HepG2 (cell line): ENCODE measurements at regions of chr19 and their contacts with region 1.

Region 1: GRCh38 chr19:18192673-18193387 is at the start of gene MPV17L2:
- DNase-seq: peak; percentile 99
- ATAC-seq: peak; percentile 93
- H3K4me3 ChIP-seq: peak within 1 kb of the TSS; percentile 70 to 84 (median 83)
- H3K27ac ChIP-seq: peak within 1 kb of the TSS; percentile 73
- H3K4me1 ChIP-seq: peaks cover 30% of the 10 kb centered on the region
- H3K27me3 ChIP-seq: no peaks in the 10 kb centered on the region; a peak in 1 of 5 replicates
- CTCF ChIP-seq: no peak; the same call in 1 of the 2 replicates
- EP300 ChIP-seq: no peak
- POLR2A ChIP-seq: peak; percentile 66 to 85
- RAD21 ChIP-seq: 0 out of 2 replicates have a peak, but pooled peaks have one; percentile 38
- total RNA-seq, gene MPV17L2: 13.0 and 16.7 TPM in 2 replicates

Region 2: DNA sequence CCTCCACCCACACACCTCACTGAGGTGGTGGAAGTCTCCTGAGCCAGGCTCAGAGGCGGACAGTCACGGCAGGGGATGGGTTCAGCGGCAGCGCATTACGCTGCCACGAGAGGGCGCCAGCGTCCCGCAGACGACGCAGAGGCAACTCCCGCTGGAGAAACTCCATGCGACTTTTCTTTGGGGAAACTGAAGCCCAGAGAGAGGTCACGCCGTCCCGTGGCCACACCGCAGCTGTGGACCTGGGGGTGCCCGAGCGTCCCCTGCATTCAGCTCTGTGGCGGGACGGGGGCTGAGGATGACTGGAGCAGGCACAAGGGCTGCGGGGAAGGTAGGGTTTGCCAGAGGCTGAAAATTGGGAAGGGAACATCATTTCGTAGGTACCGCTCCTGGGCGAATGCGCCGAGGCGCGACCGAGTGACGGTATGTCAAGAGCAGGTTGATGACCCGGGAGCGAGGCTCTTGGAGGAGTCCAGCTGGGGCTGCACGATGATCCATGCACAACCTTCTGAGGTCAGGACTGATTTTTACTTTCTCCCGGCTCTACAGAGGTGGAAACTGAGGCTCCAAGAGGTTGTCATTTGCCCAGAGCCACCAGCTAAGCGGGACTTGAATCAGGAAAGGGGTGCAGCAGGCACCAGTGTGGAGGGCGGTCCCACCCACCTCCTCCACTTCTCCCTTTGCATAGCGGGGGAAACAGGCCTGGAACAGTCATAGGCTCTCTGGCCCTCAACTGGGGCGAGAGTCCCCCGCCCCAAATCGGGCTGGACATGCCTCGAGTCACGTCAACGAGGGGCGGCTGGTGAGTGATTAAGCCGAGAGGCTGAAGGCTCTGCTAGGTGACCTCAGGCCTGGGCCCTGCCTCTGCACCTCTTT is 185.6 kb before region 1 on chr19:
- CTCF ChIA-PET with region 1: no interaction called
- POLR2A ChIA-PET with region 1: no interaction called
- in situ Hi-C with region 1: no loop called
- intact Hi-C with region 1: no loop called
- DNase-seq: peak; percentile 46
- ATAC-seq: peak; percentile 88
- H3K4me3 ChIP-seq: peak overlapping the region; percentile 36 to 52 (median 40); a peak in 5 of 6 replicates
- H3K27ac ChIP-seq: no peak overlapping the region
- H3K4me1 ChIP-seq: peaks cover 31% of the 10 kb centered on the region
- H3K27me3 ChIP-seq: no peaks in the 10 kb centered on the region
- CTCF ChIP-seq: peak; percentile 99
- EP300 ChIP-seq: no peak
- POLR2A ChIP-seq: no peak
- RAD21 ChIP-seq: peak; percentile 99

Region 3: DNA sequence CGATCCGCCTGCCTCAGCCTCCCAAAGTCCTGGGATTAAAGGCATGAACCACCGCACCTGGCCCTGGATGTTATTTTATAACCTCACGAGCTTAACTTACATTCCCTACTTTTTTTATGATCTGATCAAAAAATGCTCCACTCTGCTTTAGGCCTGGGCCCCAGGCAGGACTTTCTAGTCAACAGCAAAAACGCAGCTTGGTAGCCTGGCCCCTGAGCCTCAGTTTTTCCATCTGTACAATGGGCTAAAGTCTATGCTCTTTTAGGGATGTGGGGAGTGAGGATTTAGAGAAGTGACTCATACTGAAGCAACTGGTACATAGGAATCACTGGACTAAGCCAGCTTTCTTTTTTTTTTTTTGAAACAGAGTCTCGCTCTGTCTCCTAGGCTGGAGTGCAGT is 51.8 kb before region 1 on chr19:
- CTCF ChIA-PET with region 1: no interaction called
- POLR2A ChIA-PET with region 1: no interaction called
- in situ Hi-C with region 1: no loop called
- intact Hi-C with region 1: no loop called
- DNase-seq: no peak
- ATAC-seq: no peak
- H3K4me3 ChIP-seq: no peak overlapping the region
- H3K27ac ChIP-seq: no peak overlapping the region
- H3K4me1 ChIP-seq: peaks cover 20% of the 10 kb centered on the region
- H3K27me3 ChIP-seq: no peaks in the 10 kb centered on the region; a peak in 1 of 5 replicates
- CTCF ChIP-seq: no peak
- EP300 ChIP-seq: no peak
- POLR2A ChIP-seq: no peak
- RAD21 ChIP-seq: no peak

Region 4: DNA sequence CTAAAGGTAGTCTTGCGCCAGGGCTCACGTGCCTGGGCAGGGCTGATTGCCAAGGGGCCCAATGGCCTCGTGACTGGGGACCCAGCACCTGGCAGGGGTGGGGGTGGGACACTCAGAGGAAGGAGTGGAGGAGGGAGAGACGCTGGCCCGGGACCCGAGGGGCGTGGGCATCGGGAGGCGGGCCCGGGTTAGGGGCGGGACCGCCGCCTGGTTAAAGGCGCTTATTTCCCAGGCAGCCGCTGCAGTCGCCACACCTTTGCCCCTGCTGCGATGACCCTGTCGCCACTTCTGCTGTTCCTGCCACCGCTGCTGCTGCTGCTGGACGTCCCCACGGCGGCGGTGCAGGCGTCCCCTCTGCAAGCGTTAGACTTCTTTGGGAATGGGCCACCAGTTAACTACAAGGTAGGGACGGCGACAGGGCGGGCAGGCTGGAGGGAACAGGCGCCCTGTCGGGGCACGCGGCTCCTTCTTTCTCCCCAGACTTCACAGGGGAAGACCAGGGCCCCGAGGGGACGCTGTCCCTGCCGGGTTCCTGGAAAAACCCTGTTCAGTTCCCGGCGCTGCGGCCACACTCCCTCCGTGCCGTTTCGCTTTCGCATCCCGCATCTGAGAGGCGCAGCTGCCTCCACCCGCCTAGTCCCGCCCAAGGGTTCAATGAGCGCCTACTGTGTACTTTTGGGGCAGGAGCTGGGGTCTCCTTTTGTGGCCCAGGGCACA is 19.1 kb before region 1 on chr19 and contains the start of gene IFI30:
- CTCF ChIA-PET with region 1: no interaction called
- POLR2A ChIA-PET with region 1: interaction called, 15 read pairs
- in situ Hi-C with region 1: no loop called
- intact Hi-C with region 1: no loop called
- DNase-seq: peak; percentile 68
- ATAC-seq: peak; percentile 85
- H3K4me3 ChIP-seq: peak within 1 kb of the TSS; percentile 59 to 80 (median 69)
- H3K27ac ChIP-seq: peak within 1 kb of the TSS; percentile 62
- H3K4me1 ChIP-seq: peaks cover 14% of the 10 kb centered on the region
- H3K27me3 ChIP-seq: no peaks in the 10 kb centered on the region
- CTCF ChIP-seq: peak; percentile 34
- EP300 ChIP-seq: no peak; a peak in 1 of 4 replicates
- POLR2A ChIP-seq: peak; percentile 86 to 97
- RAD21 ChIP-seq: 0 out of 2 replicates have a peak, but pooled peaks have one; percentile 35
- total RNA-seq, gene IFI30: 41.2 and 79.4 TPM in 2 replicates

Region 5: DNA sequence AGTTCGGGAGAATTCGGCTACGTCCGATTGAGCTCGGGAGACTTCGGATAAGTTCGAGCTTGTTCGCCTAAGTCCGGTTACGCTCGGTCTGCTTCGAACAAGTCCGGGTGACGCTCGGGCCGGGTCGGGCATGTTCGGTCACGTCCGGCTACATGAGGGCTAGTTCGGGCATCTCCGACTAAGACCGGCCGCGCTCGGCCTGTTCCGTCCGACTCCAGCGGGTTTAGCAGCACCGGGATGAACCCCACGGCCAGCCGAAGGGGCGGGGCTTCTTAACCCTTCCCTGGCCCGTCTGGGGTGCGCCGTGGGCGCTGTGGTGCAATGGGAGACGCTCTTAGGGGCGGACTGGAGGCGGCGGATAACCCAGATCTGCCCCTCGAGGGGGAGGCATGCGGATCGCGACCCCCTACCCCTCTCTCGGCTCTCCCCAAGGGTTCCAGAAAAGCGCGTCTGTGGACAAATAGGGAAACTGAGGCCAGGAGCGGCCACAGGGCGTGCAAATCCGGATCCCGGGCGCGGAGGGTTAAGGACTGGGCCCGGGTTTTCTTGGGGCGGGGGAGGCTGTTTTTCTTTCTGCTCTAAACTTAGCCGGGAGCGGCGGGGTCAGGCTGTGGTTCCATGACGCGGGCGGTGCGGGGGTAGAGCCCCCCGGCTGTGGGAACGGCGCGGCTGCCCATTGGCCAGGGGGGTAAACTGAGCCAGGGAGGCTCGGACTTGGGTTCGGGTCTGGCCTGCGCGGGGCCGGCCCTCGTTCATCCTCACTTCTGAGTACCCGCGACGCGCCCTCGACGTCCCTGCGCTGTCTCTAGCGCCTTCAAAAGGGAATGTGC is 31.9 kb after region 1 on chr19:
- CTCF ChIA-PET with region 1: no interaction called
- POLR2A ChIA-PET with region 1: interaction called, 16 read pairs
- in situ Hi-C with region 1: no loop called
- intact Hi-C with region 1: no loop called
- DNase-seq: peak; percentile 95
- ATAC-seq: peak; percentile 94
- H3K4me3 ChIP-seq: peak overlapping the region; percentile 54 to 80 (median 58)
- H3K27ac ChIP-seq: peak overlapping the region; percentile 65
- H3K4me1 ChIP-seq: peaks cover 51% of the 10 kb centered on the region
- H3K27me3 ChIP-seq: peaks cover 1 to 7% of the 10 kb centered on the region in 2 experiments; a peak in 2 of 5 replicates
- CTCF ChIP-seq: no peak
- EP300 ChIP-seq: no peak
- POLR2A ChIP-seq: 0 out of 4 replicates have a peak, but pooled peaks of 1 of the 2 experiments have one; percentile 15
- RAD21 ChIP-seq: no peak

Region 6: DNA sequence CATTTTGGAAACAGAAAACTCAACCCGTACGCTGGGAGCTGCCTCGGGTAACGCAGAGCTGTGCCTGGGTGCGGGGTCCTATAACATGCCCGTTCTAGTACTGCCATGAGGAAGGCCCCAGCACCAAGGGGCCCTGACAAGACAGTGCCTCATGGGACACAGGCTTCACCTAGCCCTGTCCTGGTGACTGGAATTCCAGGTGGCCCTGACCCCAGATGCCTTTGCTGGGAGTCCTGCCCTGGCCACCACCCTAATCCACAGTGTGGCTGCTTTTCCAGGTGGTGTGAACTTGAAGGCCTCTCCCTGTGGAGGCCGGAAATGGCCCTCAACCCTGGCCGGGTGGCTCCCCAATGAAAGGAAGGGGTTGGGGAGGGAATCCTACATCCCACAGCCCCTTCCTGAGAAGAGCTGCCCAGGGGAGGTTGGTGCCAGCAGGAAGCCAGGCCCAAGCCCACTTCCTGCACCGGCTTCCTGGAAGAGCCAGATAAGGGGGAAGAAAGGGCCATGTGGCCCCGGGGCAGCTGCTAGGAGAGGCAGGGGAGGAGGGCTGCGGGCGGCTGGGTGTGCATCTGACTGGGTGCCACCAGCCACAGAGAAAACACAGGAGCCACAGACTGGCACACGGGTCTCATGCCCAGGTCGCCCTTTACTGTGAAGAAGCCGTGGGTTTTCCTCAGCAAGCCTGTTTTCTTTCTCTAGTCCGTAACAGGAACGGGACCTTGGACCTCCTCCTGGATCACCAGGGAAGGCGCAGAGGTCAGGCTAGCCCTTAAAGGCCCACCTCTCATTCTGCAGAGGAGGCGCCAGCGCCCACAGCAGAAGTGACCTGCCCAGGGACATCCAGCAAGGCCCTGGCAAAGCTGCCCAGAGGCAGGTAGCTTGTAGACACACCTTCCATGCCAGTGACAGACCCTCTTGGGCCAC is 125.3 kb after region 1 on chr19:
- CTCF ChIA-PET with region 1: no interaction called
- POLR2A ChIA-PET with region 1: no interaction called
- in situ Hi-C with region 1: no loop called
- intact Hi-C with region 1: no loop called
- DNase-seq: peak; percentile 54
- ATAC-seq: peak; percentile 14
- H3K4me3 ChIP-seq: peak overlapping the region; percentile 20 to 60 (median 37); a peak in 5 of 6 replicates
- H3K27ac ChIP-seq: peak overlapping the region; percentile 92
- H3K4me1 ChIP-seq: peaks cover 86% of the 10 kb centered on the region
- H3K27me3 ChIP-seq: no peaks in the 10 kb centered on the region
- CTCF ChIP-seq: 0 out of 2 replicates have a peak, but pooled peaks have one; percentile 8
- EP300 ChIP-seq: no peak
- POLR2A ChIP-seq: peak in 1 of 2 experiments; percentile 54; a peak in 2 of 4 replicates
- RAD21 ChIP-seq: no peak; the same call in 1 of the 2 replicates